WTC11 (cell line): ENCODE measurements at regions of chr1 and their contacts with region 1.

Region 1: GRCh38 chr1:9004700-9005394 is 21.4 kb downstream of the SLC2A7 start:
- DNase-seq: peak; percentile 91
- ATAC-seq: peak; percentile 66
- H3K4me3 Mint-ChIP-seq: no peak overlapping the region
- H3K27ac Mint-ChIP-seq: no peak overlapping the region
- H3K4me1 Mint-ChIP-seq: peaks cover 9% of the 10 kb centered on the region
- H3K27me3 Mint-ChIP-seq: no peaks in the 10 kb centered on the region
- CTCF ChIP-seq: peak; percentile 96

Region 2: GRCh38 chr1:8780405-8780804 is 224.4 kb before region 1 on chr1:
- CTCF ChIA-PET with region 1: no interaction called
- POLR2A ChIA-PET with region 1: no interaction called
- DNase-seq: no peak
- ATAC-seq: no peak
- H3K4me3 Mint-ChIP-seq: no peak overlapping the region
- H3K27ac Mint-ChIP-seq: peak overlapping the region; percentile 47; the same call in 1 of the 2 replicates
- H3K4me1 Mint-ChIP-seq: peaks cover 37% of the 10 kb centered on the region
- H3K27me3 Mint-ChIP-seq: no peaks in the 10 kb centered on the region
- CTCF ChIP-seq: no peak

Region 3: DNA sequence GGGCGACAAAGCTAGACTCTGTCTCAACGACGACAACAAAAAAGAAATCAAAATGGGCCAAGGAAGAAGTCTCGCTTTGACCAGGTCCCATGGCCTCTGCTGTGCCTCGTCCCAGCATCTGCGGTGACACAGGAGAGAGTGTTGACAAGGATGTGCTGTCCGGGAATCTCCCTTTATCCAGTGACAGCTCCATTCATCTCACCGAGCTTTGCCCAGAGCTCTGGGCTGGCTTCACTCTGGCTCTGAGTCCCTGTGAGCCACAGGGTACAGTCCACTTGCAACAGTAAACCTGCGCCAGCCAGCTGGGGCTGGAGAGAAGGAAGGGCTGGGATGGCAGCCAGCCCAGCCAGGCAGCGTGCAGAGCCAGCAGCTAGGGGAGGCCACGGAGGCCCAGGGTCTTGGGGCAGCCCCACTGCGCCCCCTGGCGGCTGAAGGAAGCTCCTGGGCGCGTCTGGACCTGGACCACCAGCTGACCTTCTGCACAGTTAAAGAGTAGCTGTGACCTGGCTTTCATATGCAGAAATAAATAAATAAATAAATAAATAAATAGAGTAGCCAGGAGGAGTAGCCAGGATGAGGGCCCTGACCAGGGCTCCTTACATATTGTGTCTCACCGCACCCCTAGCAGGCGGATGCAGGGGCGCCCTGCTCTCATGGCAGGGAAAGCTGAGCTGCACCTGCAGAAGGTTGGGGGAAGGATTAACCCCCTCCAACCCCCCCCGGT is 156.0 kb before region 1 on chr1:
- CTCF ChIA-PET with region 1: interaction called, 35 read pairs
- POLR2A ChIA-PET with region 1: no interaction called
- DNase-seq: peak; percentile 91
- ATAC-seq: peak; percentile 94
- H3K4me3 Mint-ChIP-seq: no peak overlapping the region
- H3K27ac Mint-ChIP-seq: no peak overlapping the region
- H3K4me1 Mint-ChIP-seq: peaks cover 10% of the 10 kb centered on the region; the same call in 1 of the 2 replicates
- H3K27me3 Mint-ChIP-seq: no peaks in the 10 kb centered on the region
- CTCF ChIP-seq: peak; percentile 97

Region 4: GRCh38 chr1:8910914-8911313 is 93.9 kb before region 1 on chr1:
- CTCF ChIA-PET with region 1: interaction called, 34 read pairs
- POLR2A ChIA-PET with region 1: interaction called, 3 read pairs
- DNase-seq: no peak
- ATAC-seq: peak; percentile 18
- H3K4me3 Mint-ChIP-seq: no peak overlapping the region
- H3K27ac Mint-ChIP-seq: no peak overlapping the region
- H3K4me1 Mint-ChIP-seq: peaks cover 42% of the 10 kb centered on the region
- H3K27me3 Mint-ChIP-seq: peaks cover 21% of the 10 kb centered on the region
- CTCF ChIP-seq: no peak

Region 5: DNA sequence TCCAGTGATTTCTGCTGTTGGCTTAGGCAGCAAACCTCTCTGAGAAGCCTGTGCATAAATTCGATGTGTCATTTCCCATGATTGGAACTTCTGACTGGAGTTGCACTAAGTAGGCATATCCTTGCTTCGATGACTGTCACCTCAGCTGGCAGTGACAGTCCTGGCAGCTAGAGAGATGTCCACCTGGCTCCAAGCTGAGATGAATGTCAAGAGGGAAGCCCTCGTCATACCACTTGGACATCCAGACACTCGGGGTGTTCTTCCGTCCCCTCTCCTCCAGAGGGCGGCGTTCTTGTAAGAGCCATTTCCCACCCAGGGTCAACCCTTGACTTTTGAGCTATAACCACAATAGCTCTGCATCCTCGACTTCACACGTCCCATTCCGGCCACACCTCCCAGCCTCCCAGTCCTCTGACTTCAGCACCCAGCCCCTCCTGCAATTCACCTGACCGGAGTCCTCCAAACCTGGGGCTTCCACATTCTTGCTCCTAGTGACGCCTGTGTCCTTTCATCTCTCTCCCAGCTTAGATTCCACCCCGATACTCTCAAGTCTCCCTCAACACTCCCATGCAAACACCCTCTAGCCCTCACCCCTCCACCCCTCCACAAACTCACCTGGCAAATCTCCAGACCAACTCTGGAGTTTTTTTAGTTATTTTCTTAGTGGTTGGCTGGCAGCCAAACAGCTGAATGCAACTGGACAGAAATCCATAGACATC is 41.9 kb before region 1 on chr1:
- CTCF ChIA-PET with region 1: interaction called, 88 read pairs
- POLR2A ChIA-PET with region 1: no interaction called
- DNase-seq: peak; percentile 80
- ATAC-seq: peak; percentile 98
- H3K4me3 Mint-ChIP-seq: no peak overlapping the region
- H3K27ac Mint-ChIP-seq: no peak overlapping the region
- H3K4me1 Mint-ChIP-seq: peaks cover 5% of the 10 kb centered on the region
- H3K27me3 Mint-ChIP-seq: no peaks in the 10 kb centered on the region; the same call in 1 of the 2 replicates
- CTCF ChIP-seq: peak; percentile 55; the same call in 1 of the 2 replicates

Region 6: GRCh38 chr1:9025449-9025848 is 20.6 kb after region 1 on chr1:
- CTCF ChIA-PET with region 1: interaction called, 29 read pairs
- POLR2A ChIA-PET with region 1: no interaction called
- DNase-seq: no peak
- ATAC-seq: no peak
- H3K4me3 Mint-ChIP-seq: no peak overlapping the region
- H3K27ac Mint-ChIP-seq: no peak overlapping the region
- H3K4me1 Mint-ChIP-seq: no peaks in the 10 kb centered on the region
- H3K27me3 Mint-ChIP-seq: no peaks in the 10 kb centered on the region; the same call in 1 of the 2 replicates
- CTCF ChIP-seq: no peak

Region 7: GRCh38 chr1:9128520-9129265 is 123.8 kb after region 1 on chr1 and contains the start of gene GPR157:
- CTCF ChIA-PET with region 1: interaction called, 11 read pairs
- POLR2A ChIA-PET with region 1: no interaction called
- DNase-seq: peak; percentile 87
- ATAC-seq: peak; percentile 89
- H3K4me3 Mint-ChIP-seq: peak within 1 kb of the TSS; percentile 86
- H3K27ac Mint-ChIP-seq: no peak within 1 kb of the TSS; the same call in 1 of the 2 replicates
- H3K4me1 Mint-ChIP-seq: peaks cover 18% of the 10 kb centered on the region
- H3K27me3 Mint-ChIP-seq: peaks cover 14% of the 10 kb centered on the region
- CTCF ChIP-seq: no peak
- total RNA-seq, gene GPR157: 3.4 to 9.6 TPM (median 6.0 TPM) in 3 replicates